Ascending aorta (tissue), 2 donors: ENCODE measurements at regions of chr5 and their contacts with region 1.

Region 1: DNA sequence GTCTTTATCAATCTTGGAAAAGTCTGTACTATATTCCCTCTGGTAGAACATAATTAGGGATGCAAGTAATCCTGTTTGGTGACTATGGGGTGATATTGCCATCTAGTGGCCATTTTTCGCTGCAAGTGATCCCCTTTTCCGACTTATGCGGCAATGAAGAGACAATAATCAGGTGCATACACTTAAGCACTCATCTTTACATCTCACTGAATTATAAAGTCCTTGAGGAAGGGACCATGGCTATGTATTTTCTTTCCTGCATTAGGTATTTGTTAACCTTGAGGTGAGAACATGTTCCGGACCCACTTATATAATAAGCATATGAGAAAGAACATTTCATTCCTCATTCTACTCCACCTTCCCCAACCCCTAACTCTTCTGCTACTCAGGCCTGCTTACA is 19.6 kb upstream of the LIX1 start:
- DNase-seq: peak in 1 of 2 donors; percentile 73
- H3K4me3 ChIP-seq: no peak overlapping the region
- H3K27ac ChIP-seq: no peak overlapping the region
- H3K4me1 ChIP-seq: no peaks in the 10 kb centered on the region
- H3K27me3 ChIP-seq: no peaks in the 10 kb centered on the region
- CTCF ChIP-seq: peak; percentile 51 to 86 (median 76)

Region 2: GRCh38 chr5:96614110-96614691 is 547.8 kb before region 1 on chr5:
- intact Hi-C with region 1: loop called (anchors 5 kb)
- DNase-seq: peak in 1 of 2 donors; percentile 77
- H3K4me3 ChIP-seq: peak overlapping the region in 1 of 2 donors; percentile 28
- H3K27ac ChIP-seq: peak overlapping the region; percentile 76 to 80
- H3K4me1 ChIP-seq: peaks cover 8 to 15% of the 10 kb centered on the region in 2 donors
- H3K27me3 ChIP-seq: no peaks in the 10 kb centered on the region
- CTCF ChIP-seq: peak; percentile 40 to 59 (median 52)

Region 3: DNA sequence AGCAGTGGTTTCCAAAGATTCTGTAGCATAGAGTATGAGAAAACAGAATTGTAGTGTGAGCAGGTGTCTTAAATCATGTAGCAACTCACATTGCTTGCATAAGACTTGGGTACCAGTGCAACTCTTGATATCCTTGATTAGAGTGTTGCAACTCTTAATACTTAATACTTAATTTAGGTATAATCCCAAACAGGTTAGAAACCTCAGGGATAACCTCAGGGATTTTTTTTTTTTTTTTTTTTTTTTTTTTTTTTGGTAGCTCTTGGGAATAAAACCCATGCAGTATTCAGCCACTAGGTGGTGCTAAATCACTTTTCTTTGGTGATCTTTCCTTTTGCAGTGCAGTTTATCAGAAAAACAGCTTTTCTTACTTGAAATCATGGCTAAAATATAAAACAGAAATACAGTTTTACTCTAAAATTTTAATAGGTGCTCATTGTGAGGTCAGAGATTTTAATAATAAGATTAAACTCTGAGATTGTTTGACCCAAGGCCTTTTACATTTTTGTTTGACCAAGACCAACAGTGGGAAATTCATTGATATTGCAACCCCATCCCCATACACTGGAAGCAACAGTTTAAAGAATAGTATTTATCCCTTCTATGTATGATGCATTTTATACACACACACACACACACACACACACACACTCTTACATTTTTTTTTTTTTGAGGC is 409.6 kb before region 1 on chr5:
- intact Hi-C with region 1: loop called (anchors 5 kb)
- DNase-seq: no peak
- H3K4me3 ChIP-seq: no peak overlapping the region
- H3K27ac ChIP-seq: peak overlapping the region in 1 of 2 donors; percentile 29
- H3K4me1 ChIP-seq: no peaks in the 10 kb centered on the region
- H3K27me3 ChIP-seq: no peaks in the 10 kb centered on the region
- CTCF ChIP-seq: peak in 2 of 3 experiments; percentile 54 to 68

Region 4: DNA sequence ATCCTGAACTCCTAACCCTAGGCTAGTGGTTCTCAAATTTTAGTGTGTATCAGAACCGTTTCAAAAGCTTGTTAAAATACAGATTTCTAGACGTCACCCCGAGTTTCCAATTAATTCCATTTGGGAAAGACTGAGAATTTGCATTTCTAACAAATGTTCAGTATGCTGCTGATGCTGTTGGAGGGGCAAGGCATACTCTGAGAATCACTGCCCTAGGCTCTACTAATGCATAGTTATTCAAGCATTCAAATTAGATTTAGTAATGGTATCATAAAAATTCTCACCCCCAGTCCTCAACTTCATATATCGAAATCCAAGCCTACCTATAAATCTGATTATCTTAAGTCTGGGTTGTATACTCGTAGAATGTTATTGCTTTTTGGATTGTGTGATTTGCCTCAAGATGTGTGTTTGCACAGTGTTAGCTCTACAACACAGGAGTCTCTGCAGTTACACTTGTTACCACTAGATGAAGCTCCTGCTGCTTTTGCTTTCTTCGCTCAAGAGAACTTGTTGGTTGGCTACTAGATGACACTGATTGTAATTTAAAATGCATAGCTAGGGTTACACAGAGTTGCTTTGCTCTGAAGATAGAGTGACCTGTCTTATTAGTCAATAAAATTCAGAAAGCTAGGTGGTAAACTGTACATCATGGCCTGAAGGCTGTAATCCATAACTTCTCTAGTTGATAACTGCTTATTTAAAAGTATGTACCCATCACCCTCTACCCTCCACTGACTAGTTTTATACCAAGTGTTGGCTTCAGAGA is 293.3 kb before region 1 on chr5:
- intact Hi-C with region 1: loop called (anchors 1 kb)
- DNase-seq: no peak
- H3K4me3 ChIP-seq: no peak overlapping the region
- H3K27ac ChIP-seq: no peak overlapping the region
- H3K4me1 ChIP-seq: no peaks in the 10 kb centered on the region
- H3K27me3 ChIP-seq: no peaks in the 10 kb centered on the region
- CTCF ChIP-seq: peak; percentile 75 to 92 (median 89)

Region 5: DNA sequence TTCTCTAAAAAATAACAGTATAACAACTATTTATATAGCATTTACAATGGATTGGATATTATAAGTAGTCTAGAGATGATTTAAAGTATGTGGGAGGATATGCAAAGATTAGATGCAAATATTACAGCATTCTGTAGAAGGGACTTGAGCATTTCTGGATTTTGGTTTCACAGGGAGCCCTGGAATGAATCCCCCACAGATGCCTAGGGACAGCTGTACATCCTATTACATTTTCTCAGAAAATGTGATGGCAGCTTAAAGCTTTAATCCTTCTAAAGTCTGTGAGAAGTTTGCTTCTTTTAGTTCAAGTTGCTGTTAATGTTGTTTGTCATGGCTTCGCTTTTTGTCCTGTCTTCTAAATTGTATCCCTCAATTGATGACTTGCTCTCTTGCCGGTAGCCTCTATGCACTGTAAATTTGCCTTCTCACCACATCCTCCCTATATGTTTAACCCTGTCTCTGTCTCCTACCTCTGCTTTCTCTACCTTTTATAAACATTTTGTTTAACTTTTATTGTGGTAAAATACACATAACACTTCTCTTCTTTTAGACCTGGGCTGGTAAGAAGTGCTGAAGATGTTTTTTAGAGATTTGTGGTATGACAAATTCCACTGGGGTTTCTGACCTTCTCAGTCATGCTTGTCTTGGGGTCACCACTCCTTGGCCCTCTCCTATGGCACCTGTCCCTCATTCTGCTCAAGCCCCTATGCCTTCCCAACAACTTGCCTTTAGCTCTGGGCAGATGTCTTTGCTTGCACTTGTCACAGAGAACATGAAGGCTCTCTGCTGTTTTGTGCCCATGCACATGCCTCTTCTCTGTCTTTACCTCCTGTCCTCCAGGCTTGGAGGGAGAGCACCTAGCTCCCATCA is 188.3 kb before region 1 on chr5:
- intact Hi-C with region 1: no loop called
- DNase-seq: no peak
- H3K4me3 ChIP-seq: no peak overlapping the region
- H3K27ac ChIP-seq: no peak overlapping the region
- H3K4me1 ChIP-seq: peaks cover 0 to 9% of the 10 kb centered on the region in 2 donors
- H3K27me3 ChIP-seq: no peaks in the 10 kb centered on the region
- CTCF ChIP-seq: no peak

Region 6: GRCh38 chr5:96997265-96997859 is 164.7 kb before region 1 on chr5:
- intact Hi-C with region 1: loop called (anchors 10 kb)
- DNase-seq: no peak
- H3K4me3 ChIP-seq: no peak overlapping the region
- H3K27ac ChIP-seq: no peak overlapping the region
- H3K4me1 ChIP-seq: no peaks in the 10 kb centered on the region
- H3K27me3 ChIP-seq: no peaks in the 10 kb centered on the region
- CTCF ChIP-seq: peak in 2 of 3 experiments; percentile 5 to 34

Region 7: DNA sequence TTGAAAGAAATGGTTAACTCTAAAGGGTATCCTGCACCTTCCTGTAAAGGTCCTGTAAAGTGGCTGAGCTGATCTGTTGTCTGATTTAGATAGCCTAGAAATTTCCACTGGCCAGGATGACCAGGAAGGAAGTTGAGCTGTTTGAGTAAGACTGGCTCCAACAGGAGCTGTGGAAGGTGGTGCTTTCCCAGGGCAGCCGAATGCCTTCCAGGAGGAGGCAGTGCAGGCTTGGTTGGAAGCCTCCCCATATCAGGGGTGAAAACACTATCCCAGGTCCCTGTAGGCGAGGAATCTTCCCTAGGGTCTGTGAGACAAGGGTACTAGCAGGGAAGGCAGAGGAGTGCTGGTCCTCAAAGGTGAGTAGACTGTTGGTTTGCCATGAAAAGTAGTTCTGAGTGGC is 118.0 kb before region 1 on chr5:
- intact Hi-C with region 1: loop called (anchors 10 kb)
- DNase-seq: no peak
- H3K4me3 ChIP-seq: no peak overlapping the region
- H3K27ac ChIP-seq: no peak overlapping the region
- H3K4me1 ChIP-seq: no peaks in the 10 kb centered on the region
- H3K27me3 ChIP-seq: no peaks in the 10 kb centered on the region
- CTCF ChIP-seq: peak in 1 of 3 experiments; percentile 34

Region 8: DNA sequence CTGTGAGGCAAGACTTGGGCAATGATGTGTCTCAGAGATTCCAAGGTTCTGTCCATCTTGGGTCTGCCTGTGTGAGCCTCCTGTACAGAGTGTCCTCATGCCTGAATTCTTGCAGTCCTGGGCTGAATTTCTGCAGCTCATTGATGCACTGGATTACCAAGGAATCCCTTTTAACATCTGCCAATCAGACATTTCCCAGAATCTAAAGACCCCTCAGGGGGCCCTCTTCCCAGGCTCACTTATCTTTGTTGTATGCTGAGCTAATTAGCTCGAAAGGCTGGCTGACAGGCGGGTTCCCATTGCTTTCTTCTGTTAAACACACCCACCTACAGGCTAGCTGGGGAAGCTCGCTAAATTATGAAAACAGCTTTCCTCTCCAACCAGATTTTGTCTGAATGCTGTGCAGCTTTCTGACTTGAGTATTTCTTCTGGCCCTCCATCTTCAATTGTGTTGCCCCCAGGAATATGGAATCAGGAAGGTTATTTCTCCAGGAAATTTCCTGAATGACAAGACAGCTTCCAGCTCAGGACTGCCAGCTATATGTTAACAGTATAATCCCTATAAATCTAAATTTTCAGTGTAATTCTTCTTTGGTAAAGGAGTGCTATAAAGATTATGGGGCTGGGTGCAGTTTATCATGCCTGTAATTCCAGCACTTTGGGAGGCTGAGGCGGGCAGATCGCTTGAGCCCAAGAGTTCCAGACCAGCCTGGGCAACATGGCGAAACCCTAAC is 19.4 kb before region 1 on chr5 and contains the start of gene LIX1:
- intact Hi-C with region 1: no loop called
- DNase-seq: no peak
- H3K4me3 ChIP-seq: no peak within 1 kb of the TSS
- H3K27ac ChIP-seq: no peak within 1 kb of the TSS
- H3K4me1 ChIP-seq: no peaks in the 10 kb centered on the region
- H3K27me3 ChIP-seq: no peaks in the 10 kb centered on the region
- CTCF ChIP-seq: peak in 2 of 3 experiments; percentile 7 to 31
- total RNA-seq, gene LIX1: not detected

Region 9: DNA sequence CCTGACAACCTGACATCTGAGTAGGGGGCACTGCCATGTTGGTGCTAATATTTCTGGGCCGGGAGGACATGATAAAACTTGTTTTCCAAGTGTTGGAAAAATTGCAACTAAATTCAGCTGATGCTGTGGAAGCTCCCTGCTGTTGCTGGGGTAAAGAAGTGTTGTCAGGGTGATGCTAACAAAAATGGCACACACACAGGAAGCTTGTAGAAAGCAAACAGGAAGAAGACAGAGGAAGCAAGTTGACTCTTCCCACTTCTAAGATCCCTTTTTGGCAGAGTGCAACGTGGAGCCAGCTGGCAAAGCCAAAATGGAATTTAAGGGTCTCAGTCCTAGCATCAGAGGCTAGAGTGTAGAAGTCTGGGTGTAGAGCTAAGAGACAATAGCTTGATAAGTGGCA is 32.3 kb after region 1 on chr5:
- intact Hi-C with region 1: no loop called
- DNase-seq: no peak
- H3K4me3 ChIP-seq: no peak overlapping the region
- H3K27ac ChIP-seq: no peak overlapping the region
- H3K4me1 ChIP-seq: no peaks in the 10 kb centered on the region
- H3K27me3 ChIP-seq: no peaks in the 10 kb centered on the region
- CTCF ChIP-seq: no peak

Region 10: DNA sequence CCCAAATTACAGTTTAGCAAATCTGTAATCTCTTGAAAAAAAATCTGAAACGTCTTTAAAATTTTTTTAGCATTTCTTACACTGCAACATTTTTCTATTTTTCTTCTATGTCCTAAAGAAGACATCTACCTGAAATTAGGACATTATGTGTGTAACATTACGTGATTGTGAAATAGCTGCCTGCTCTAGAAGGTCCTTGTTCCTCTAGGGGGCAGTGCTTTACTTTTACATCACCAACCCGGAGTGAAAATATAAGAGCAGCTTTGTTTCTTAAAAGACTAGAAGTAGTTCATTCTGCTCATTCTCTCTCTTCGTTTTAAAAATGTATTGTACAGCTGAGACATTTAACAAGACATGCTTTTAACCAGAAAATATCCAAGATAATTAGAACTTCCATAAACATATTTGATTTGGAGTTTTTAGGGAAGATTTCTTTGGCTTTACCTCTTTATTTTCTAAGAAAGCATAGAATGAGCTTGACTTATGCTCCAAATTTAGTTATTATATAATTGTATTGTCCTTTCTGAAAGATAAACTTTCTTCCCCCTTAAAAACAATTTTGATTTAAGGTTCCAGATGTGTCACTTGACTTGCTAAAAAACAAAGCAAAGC is 69.1 kb after region 1 on chr5:
- intact Hi-C with region 1: no loop called
- DNase-seq: no peak
- H3K4me3 ChIP-seq: peak overlapping the region in 1 of 2 donors; percentile 28
- H3K27ac ChIP-seq: no peak overlapping the region
- H3K4me1 ChIP-seq: no peaks in the 10 kb centered on the region
- H3K27me3 ChIP-seq: no peaks in the 10 kb centered on the region
- CTCF ChIP-seq: peak; percentile 12 to 74 (median 65)